AG04450 (cell line): ENCODE measurements at regions of chr14 and their contacts with region 1.

Region 1: GRCh38 chr14:90388437-90388836 is 8.4 kb upstream of the CALM1 start:
- DNase-seq: peak; percentile 57
- H3K4me3 ChIP-seq: no peak overlapping the region
- H3K27ac ChIP-seq: peak overlapping the region; percentile 65
- H3K27me3 ChIP-seq: no peaks in the 10 kb centered on the region
- CTCF ChIP-seq: no peak

Region 2: DNA sequence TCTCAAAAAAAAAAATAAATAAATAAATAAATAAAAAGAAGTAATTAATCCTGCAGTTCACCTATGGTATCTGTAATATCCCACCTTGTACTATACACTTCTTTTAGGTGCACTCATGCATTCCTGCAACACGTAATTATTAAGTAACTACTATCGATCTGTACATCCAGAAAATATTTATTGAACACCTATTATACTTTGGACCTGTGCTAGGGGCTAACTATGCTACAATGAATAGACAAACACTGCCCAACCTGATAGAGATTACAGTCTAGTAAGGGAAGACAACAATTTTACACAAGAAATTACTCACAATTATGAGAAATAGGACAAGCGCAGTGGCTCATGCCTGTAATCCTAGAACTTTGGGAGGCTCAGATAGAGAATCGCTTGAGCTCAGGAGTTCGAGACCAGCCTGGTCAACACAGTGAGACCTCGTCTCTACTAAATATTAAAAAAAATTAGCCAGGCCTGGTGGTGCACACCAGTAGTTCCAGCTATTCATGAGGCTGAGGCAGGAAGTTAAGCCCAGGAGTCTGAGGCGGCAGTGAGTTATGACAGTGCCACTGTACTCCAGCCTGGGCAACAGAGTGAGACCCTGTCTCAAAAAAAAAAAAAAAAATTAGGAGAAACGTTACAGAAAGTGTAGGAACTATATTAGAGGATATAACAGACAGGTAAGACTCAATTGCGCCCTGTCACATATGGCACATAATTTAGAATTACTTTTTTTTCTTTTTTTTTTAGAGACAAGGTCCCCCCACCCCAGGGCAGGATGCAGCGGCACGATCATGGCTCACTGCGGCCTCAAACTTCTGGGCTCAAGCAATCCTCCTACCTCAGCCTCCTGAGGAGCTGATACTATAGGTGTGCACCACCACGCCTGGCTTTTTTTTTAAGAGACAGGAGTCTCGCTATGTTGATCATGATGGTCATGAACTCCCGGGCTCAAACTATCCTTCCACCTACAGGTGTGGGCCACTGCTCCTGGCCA is 57.9 kb before region 1 on chr14:
- CTCF ChIA-PET with region 1: no interaction called
- POLR2A ChIA-PET with region 1: interaction called, 10 read pairs
- DNase-seq: no peak
- H3K4me3 ChIP-seq: peak overlapping the region; percentile 74
- H3K27ac ChIP-seq: no peak overlapping the region
- H3K27me3 ChIP-seq: no peaks in the 10 kb centered on the region
- CTCF ChIP-seq: no peak